CD8-positive, alpha-beta memory T cell (primary cell): ENCODE measurements at regions of chr7 and their contacts with region 1.

Region 1: GRCh38 chr7:64183126-64183742 is 23.8 kb upstream of the ZNF735 start:
- DNase-seq: peak in 4 of 5 donors; percentile 16 to 59 (median 29)
- H3K4me3 ChIP-seq: no peak overlapping the region
- H3K4me3 Mint-ChIP-seq: no peak overlapping the region
- H3K27ac ChIP-seq: no peak overlapping the region
- H3K27ac Mint-ChIP-seq: no peak overlapping the region
- H3K4me1 ChIP-seq: no peaks in the 10 kb centered on the region
- H3K4me1 Mint-ChIP-seq: no peaks in the 10 kb centered on the region
- H3K27me3 ChIP-seq: no peaks in the 10 kb centered on the region
- H3K27me3 Mint-ChIP-seq: peaks cover 2 to 12% of the 10 kb centered on the region in 2 donors

Region 2: DNA sequence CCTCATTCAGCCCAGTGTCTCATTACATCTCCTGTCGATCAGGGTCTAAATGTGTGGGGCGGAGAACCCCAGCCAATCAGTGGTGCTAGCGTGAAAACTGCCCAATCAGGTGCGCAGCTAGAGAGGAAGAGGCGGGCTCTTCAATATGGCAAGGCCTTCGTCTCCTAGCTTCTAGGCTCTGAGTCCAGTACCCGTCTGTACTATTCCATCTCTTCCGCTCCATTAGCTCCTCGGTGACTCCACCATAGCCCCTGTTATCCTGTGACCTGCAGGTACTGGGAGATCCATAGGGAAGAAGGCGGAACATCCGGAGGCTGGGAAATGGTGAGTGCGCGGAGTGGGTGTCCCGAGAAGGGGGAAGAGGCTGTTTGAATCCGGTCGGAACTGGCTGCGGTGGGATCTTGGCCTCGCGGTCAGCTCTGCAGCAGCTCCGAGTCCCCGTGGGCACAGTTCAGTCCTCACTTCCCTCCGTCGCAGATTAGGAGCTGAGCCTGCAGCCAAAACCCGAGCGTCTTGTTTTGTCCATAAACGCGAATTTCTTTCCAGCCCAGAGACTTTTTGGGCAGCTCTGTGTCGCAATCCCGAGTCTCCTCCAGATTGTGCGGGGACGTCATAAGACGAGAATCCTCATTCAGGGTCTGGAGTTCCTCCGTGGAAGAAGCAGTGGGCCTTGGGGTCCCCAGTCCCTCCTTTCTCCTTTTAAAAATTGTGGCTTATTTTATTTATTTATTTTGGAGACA is 137.8 kb before region 1 on chr7 and contains the start of gene ZNF727:
- CTCF ChIA-PET with region 1: no interaction called
- POLR2A ChIA-PET with region 1: no interaction called
- DNase-seq: peak in 1 of 5 donors; percentile 41
- H3K4me3 ChIP-seq: no peak within 1 kb of the TSS
- H3K4me3 Mint-ChIP-seq: peak within 1 kb of the TSS in 6 of 7 donors; percentile 29 to 82 (median 68)
- H3K27ac ChIP-seq: no peak within 1 kb of the TSS
- H3K27ac Mint-ChIP-seq: peak within 1 kb of the TSS in 2 of 8 donors; percentile 54 to 60
- H3K4me1 ChIP-seq: no peaks in the 10 kb centered on the region
- H3K4me1 Mint-ChIP-seq: no peaks in the 10 kb centered on the region
- H3K27me3 ChIP-seq: no peaks in the 10 kb centered on the region
- H3K27me3 Mint-ChIP-seq: peaks cover 0 to 7% of the 10 kb centered on the region in 2 donors
- total RNA-seq, gene ZNF727: 0.18 TPM in 1 of 2 experiments, not detected in the other

Region 3: DNA sequence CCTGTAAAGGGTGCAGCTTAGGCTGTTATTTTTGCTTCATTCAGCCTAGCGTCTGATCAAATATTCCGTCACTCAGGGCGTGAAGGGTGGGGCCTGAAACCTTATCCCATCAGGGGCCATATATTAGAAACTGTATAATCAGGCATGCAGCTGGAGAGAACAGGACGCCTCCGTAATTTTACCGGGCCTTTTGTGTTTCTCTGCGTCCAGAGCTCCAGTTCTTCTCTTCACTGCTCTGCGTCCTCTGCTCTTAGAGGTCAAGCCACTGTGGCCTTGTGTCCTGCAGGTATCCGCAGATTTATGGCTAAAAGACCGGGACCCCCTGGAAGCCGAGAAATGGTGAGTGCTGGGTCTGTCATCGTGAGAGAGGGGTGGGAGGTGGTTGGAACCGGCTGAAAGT is 23.7 kb after region 1 on chr7 and contains the start of gene ZNF735:
- CTCF ChIA-PET with region 1: no interaction called
- POLR2A ChIA-PET with region 1: no interaction called
- DNase-seq: no peak
- H3K4me3 ChIP-seq: no peak within 1 kb of the TSS
- H3K4me3 Mint-ChIP-seq: peak within 1 kb of the TSS in 1 of 7 donors; percentile 0
- H3K27ac ChIP-seq: no peak within 1 kb of the TSS
- H3K27ac Mint-ChIP-seq: no peak within 1 kb of the TSS
- H3K4me1 ChIP-seq: no peaks in the 10 kb centered on the region
- H3K4me1 Mint-ChIP-seq: no peaks in the 10 kb centered on the region
- H3K27me3 ChIP-seq: no peaks in the 10 kb centered on the region
- H3K27me3 Mint-ChIP-seq: no peaks in the 10 kb centered on the region
- total RNA-seq, gene ZNF735: not detected

Region 4: GRCh38 chr7:64621656-64622055 is 438.4 kb after region 1 on chr7:
- CTCF ChIA-PET with region 1: interaction called, 19 read pairs
- POLR2A ChIA-PET with region 1: no interaction called
- DNase-seq: no peak
- H3K4me3 ChIP-seq: no peak overlapping the region
- H3K4me3 Mint-ChIP-seq: no peak overlapping the region
- H3K27ac ChIP-seq: no peak overlapping the region
- H3K27ac Mint-ChIP-seq: no peak overlapping the region
- H3K4me1 ChIP-seq: no peaks in the 10 kb centered on the region
- H3K4me1 Mint-ChIP-seq: peaks cover 2 to 4% (median 3%) of the 10 kb centered on the region in 3 donors
- H3K27me3 ChIP-seq: no peaks in the 10 kb centered on the region
- H3K27me3 Mint-ChIP-seq: peaks cover 0 to 1% of the 10 kb centered on the region in 2 donors